Activated T-helper 2 cell treated with anti-CD3 and anti-CD28 coated beads, Interferon-gamma antibody, Interleukin-2, Interleukin-4, amounts not matched to agents 10 μg/mL and 5 μg/mL and 100 μg/mL, durations not matched to agents 14 hours and 24 hours and 36 hours (primary cell): ENCODE measurements at regions of chr3 and their contacts with region 1.

Region 1: GRCh38 chr3:106609666-106610301 is 741.0 kb upstream of the CBLB start:
- DNase-seq: peak; percentile 41
- H3K4me3 Mint-ChIP-seq: no peak overlapping the region
- H3K27ac Mint-ChIP-seq: peak overlapping the region; percentile 73
- H3K4me1 Mint-ChIP-seq: peaks cover 26% of the 10 kb centered on the region
- H3K27me3 Mint-ChIP-seq: no peaks in the 10 kb centered on the region

Region 2: GRCh38 chr3:106119614-106120082 is 490.1 kb before region 1 on chr3:
- intact Hi-C with region 1: loop called (anchors 5 kb)
- DNase-seq: no peak
- H3K4me3 Mint-ChIP-seq: no peak overlapping the region
- H3K27ac Mint-ChIP-seq: peak overlapping the region; percentile 80
- H3K4me1 Mint-ChIP-seq: peaks cover 23% of the 10 kb centered on the region
- H3K27me3 Mint-ChIP-seq: no peaks in the 10 kb centered on the region

Region 3: GRCh38 chr3:106423321-106424225 is 186.2 kb before region 1 on chr3:
- intact Hi-C with region 1: loop called (anchors 1 kb)
- DNase-seq: no peak
- H3K4me3 Mint-ChIP-seq: peak overlapping the region; percentile 20
- H3K27ac Mint-ChIP-seq: peak overlapping the region; percentile 78
- H3K4me1 Mint-ChIP-seq: peaks cover 47% of the 10 kb centered on the region
- H3K27me3 Mint-ChIP-seq: no peaks in the 10 kb centered on the region

Region 4: GRCh38 chr3:106534206-106534605 is 75.6 kb before region 1 on chr3:
- intact Hi-C with region 1: loop called (anchors 2 kb)
- DNase-seq: peak; percentile 26
- H3K4me3 Mint-ChIP-seq: no peak overlapping the region
- H3K27ac Mint-ChIP-seq: peak overlapping the region; percentile 14
- H3K4me1 Mint-ChIP-seq: peaks cover 16% of the 10 kb centered on the region
- H3K27me3 Mint-ChIP-seq: no peaks in the 10 kb centered on the region